SK-N-SH (cell line): ENCODE measurements at regions of chr15 and their contacts with region 1.

Region 1: GRCh38 chr15:89057504-89058133 is 30.6 kb upstream of the ABHD2 start:
- DNase-seq: peak; percentile 88
- H3K4me3 ChIP-seq: no peak overlapping the region; a peak in 1 of 4 replicates
- H3K27ac ChIP-seq: no peak overlapping the region
- H3K4me1 ChIP-seq: peaks cover 0 to 2% of the 10 kb centered on the region in 2 experiments; a peak in 1 of 4 replicates
- H3K27me3 ChIP-seq: no peaks in the 10 kb centered on the region
- CTCF ChIP-seq: peak; percentile 99
- EP300 ChIP-seq: no peak
- RAD21 ChIP-seq: peak; percentile 98

Region 2: DNA sequence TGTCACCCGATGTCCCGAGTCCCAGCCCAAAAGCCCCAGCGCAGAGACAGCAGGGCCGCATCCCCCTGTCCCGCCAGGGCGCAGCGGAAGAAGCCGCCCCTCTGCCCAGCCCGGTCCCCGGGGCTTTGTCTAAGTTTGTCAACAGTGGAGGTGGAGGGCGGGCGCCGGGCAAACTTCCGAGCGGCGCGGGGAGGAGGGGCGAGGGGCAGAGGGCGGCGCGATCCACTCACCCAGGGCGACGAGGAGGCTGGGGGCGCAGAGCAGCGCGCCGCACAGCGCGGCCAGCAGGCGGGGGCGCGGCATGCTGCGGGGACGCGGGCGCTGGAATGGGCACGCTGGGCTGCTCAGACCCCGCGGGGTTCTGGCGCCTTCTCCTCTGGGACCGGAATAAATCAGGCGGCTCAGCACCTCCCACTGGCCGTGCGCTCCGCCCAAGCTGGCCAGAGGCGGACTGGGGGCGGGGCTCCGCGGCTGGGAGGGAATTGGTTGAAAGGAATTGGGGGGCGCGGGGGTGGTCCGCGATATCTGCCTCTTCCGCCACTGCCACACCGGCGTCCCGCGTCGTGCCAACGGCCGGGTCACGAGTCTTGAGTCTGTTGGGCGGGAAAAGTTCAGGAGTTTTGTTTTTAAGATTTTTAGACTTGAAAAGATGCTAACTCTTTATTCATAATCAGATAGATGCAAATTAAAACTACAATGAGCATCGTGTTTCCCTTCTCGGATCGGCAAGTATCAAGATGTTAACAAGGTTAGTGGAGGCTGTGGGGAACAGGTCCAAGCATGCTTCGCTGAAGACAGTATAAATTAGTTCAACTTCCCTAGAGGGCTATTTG is 144.4 kb before region 1 on chr15 and contains the start of gene MFGE8:
- CTCF ChIA-PET with region 1: no interaction called
- POLR2A ChIA-PET with region 1: no interaction called
- DNase-seq: peak; percentile 93
- H3K4me3 ChIP-seq: peak within 1 kb of the TSS; percentile 69 to 94
- H3K27ac ChIP-seq: peak within 1 kb of the TSS; percentile 68 to 72
- H3K4me1 ChIP-seq: peaks cover 7 to 9% of the 10 kb centered on the region in 2 experiments; a peak in 2 of 4 replicates
- H3K27me3 ChIP-seq: no peaks in the 10 kb centered on the region
- CTCF ChIP-seq: no peak; the same call in 1 of the 2 replicates
- EP300 ChIP-seq: no peak
- RAD21 ChIP-seq: no peak
- polyA plus RNA-seq, gene MFGE8: 210 and 247 TPM in 2 replicates

Region 3: DNA sequence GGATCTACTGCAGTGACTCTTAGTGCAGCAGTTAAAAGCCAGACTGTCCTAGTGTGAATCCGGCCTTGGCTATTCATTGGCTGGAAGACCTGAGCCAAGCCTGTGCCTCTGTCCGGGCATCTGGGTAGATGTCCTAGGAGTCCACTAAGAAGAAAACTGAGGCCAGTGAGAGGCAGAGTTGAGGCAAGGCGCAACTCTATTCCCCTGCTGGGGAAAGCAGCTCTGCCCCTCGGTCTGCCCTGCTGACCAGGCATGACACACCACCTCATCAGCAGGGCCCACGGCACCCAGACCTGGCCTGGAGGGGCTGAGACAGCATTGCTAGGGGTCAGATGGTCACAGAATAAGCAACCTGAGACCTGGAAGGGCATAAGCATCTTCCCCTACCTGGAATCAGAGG is 16.1 kb before region 1 on chr15:
- CTCF ChIA-PET with region 1: interaction called, 12 read pairs
- POLR2A ChIA-PET with region 1: no interaction called
- DNase-seq: no peak
- H3K4me3 ChIP-seq: no peak overlapping the region
- H3K27ac ChIP-seq: no peak overlapping the region
- H3K4me1 ChIP-seq: peaks cover 0 to 6% of the 10 kb centered on the region in 2 experiments; a peak in 1 of 4 replicates
- H3K27me3 ChIP-seq: no peaks in the 10 kb centered on the region
- CTCF ChIP-seq: no peak
- EP300 ChIP-seq: no peak
- RAD21 ChIP-seq: no peak

Region 4: GRCh38 chr15:89087830-89088604 is 30.4 kb after region 1 on chr15 and contains the start of gene ABHD2:
- CTCF ChIA-PET with region 1: interaction called, 26 read pairs
- POLR2A ChIA-PET with region 1: interaction called, 3 read pairs
- DNase-seq: peak; percentile 90
- H3K4me3 ChIP-seq: peak within 1 kb of the TSS; percentile 85 to 97
- H3K27ac ChIP-seq: peak within 1 kb of the TSS; percentile 97 to 98
- H3K4me1 ChIP-seq: peaks cover 31 to 70% of the 10 kb centered on the region in 2 experiments
- H3K27me3 ChIP-seq: no peaks in the 10 kb centered on the region
- CTCF ChIP-seq: no peak
- EP300 ChIP-seq: peak in 1 of 2 experiments; percentile 78; a peak in 3 of 4 replicates
- RAD21 ChIP-seq: no peak
- polyA plus RNA-seq, gene ABHD2: 19.2 and 25.7 TPM in 2 replicates

Region 5: DNA sequence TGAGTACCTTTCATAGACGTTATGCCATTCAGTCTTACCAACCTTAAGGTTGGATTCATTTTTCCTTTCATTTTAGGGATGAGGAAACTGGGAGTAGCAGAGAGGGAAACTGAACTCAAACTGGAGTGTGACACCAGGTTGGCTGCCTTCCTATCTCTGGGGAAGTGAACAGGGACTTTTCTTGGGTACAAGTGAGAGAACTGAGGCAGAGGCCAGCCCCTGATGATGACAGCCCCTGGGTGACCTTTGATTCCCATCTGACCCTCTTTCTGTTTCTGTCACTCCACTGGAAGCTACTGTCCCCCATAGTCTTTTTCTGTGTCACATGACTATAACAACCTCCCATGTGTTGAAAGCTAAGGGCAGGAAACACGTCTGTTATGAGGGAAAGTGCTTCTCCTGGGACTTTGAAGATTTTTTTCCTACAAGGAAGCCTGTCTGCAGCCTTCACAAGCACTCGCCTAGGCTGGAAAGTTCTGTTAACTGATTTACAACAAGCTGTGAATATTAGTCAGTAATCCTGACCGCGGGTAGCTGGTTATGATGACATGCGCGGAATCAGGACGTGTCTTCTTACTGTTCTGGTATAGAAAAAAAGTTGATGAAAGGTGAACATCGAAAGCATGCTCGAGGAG is 62.0 kb after region 1 on chr15:
- CTCF ChIA-PET with region 1: interaction called, 15 read pairs
- POLR2A ChIA-PET with region 1: no interaction called
- DNase-seq: no peak
- H3K4me3 ChIP-seq: no peak overlapping the region
- H3K27ac ChIP-seq: peak overlapping the region in 1 of 2 experiments; percentile 79; a peak in 2 of 4 replicates
- H3K4me1 ChIP-seq: peaks cover 7 to 10% of the 10 kb centered on the region in 2 experiments; a peak in 2 of 4 replicates
- H3K27me3 ChIP-seq: no peaks in the 10 kb centered on the region
- CTCF ChIP-seq: no peak
- EP300 ChIP-seq: no peak
- RAD21 ChIP-seq: no peak

Region 6: DNA sequence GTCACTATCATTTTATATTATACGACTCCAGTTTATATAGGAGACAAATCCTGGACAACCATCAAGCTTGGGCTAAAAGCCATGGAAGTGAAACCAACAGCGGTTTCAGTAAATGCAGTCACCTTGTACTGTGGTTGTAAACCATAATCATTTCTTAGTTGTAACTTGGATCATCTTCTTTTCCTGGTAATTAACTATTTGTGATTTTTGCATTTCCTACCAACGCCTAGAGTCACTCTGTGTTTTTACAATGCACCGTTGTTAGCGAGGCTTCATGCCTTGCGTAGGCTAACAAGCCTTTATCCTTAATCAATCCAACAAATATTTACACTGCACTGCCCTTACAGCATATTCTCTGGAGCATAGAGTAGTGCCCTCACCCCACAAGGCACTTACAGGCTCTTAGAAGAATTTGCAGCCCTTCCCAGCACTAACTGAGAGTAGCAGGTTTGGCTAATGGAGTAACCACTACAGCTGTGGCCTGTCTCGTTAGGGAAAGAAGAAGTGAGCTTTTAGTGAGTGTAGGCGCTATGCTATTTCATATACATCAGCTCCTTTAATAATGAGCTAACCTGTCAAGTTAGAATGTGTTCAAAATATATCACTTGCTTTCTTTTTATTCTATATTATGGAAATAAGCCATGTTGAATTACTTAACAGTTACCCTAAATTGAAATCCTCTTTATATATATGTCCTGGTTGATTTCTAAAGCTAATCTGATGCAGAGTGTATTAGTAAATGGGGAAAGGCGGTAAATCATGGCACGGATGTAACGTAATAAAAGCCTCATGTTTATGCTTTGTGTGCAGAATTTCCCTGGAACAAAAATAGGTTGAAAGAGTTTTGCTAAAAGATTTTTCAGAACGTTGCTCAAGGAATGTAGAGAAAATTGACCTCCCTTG is 93.4 kb after region 1 on chr15:
- CTCF ChIA-PET with region 1: interaction called, 11 read pairs
- POLR2A ChIA-PET with region 1: no interaction called
- DNase-seq: no peak
- H3K4me3 ChIP-seq: no peak overlapping the region
- H3K27ac ChIP-seq: no peak overlapping the region; a peak in 1 of 4 replicates
- H3K4me1 ChIP-seq: no peaks in the 10 kb centered on the region; a peak in 1 of 4 replicates
- H3K27me3 ChIP-seq: no peaks in the 10 kb centered on the region
- CTCF ChIP-seq: no peak
- EP300 ChIP-seq: no peak
- RAD21 ChIP-seq: no peak

Region 7: GRCh38 chr15:89171136-89172072 is 113.8 kb after region 1 on chr15:
- CTCF ChIA-PET with region 1: interaction called, 363 read pairs
- POLR2A ChIA-PET with region 1: no interaction called
- DNase-seq: peak; percentile 60
- H3K4me3 ChIP-seq: peak overlapping the region in 1 of 2 experiments; percentile 32; a peak in 1 of 4 replicates
- H3K27ac ChIP-seq: no peak overlapping the region
- H3K4me1 ChIP-seq: peaks cover 13 to 20% of the 10 kb centered on the region in 2 experiments; a peak in 3 of 4 replicates
- H3K27me3 ChIP-seq: no peaks in the 10 kb centered on the region
- CTCF ChIP-seq: peak; percentile 83
- EP300 ChIP-seq: no peak
- RAD21 ChIP-seq: peak; percentile 84

Region 8: GRCh38 chr15:89197503-89197971 is 139.9 kb after region 1 on chr15:
- CTCF ChIA-PET with region 1: interaction called, 16 read pairs
- POLR2A ChIA-PET with region 1: no interaction called
- DNase-seq: no peak
- H3K4me3 ChIP-seq: no peak overlapping the region
- H3K27ac ChIP-seq: no peak overlapping the region
- H3K4me1 ChIP-seq: peaks cover 1 to 4% of the 10 kb centered on the region in 2 experiments; a peak in 1 of 4 replicates
- H3K27me3 ChIP-seq: no peaks in the 10 kb centered on the region
- CTCF ChIP-seq: no peak
- EP300 ChIP-seq: no peak
- RAD21 ChIP-seq: no peak